Dorsolateral prefrontal cortex (tissue), 120 donors: ENCODE measurements at regions of chr1 and their contacts with region 1.

Region 1: GRCh38 chr1:36369061-36369861 is 16.5 kb downstream of the STK40 start:
- DNase-seq: peak; percentile 58 to 86 (median 75)
- H3K4me3 ChIP-seq: no peak overlapping the region
- H3K27ac ChIP-seq: peak overlapping the region in 42 of 59 donors; percentile 2 to 69 (median 41)
- H3K27me3 ChIP-seq: no peaks in the 10 kb centered on the region
- CTCF ChIP-seq: peak; percentile 84 to 99 (median 96)

Region 2: DNA sequence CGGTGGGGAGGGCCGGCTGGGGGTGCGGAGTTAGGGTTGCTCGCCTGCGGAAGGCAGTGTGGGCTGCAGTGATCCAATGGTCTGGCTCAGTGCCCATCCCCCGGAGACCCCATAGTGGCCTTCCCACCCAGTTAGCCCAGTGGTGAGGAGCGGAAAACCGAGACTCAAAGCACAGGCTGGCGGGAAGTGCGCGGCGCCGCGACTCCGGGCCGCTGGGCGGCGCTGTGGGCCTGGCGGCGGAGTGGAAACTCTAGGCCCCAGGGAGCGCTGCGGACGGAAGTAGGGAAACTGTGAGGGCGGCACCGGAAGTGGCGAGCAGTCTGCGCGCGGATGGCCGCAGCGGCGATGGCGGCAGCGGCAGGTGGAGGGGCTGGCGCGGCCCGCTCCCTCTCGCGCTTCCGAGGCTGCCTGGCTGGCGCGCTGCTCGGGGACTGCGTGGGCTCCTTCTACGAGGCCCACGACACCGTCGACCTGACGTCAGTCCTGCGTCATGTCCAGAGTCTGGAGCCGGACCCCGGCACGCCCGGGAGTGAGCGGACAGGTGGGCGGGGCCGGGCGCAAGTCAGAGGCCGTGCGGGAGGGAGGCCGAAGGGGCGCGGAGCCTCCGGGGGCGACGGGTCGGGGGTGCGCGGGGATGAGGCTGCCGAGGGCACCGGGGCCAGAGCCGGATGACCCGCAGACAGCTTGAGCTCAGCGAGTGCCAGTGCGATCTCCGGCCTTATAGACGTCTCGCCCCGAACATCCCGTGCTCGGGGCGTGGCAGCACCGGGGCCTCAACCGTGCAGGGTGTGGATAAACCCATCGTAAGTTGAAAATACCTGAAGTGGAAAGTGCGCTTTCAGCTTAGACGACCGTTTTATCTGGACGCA is 280.5 kb before region 1 on chr1 and contains the start of gene ADPRS:
- intact Hi-C with region 1: loop called in 1 of 2 experiments (anchors 5 kb)
- DNase-seq: peak; percentile 77 to 92 (median 84)
- H3K4me3 ChIP-seq: peak within 1 kb of the TSS; percentile 71 to 100 (median 95)
- H3K27ac ChIP-seq: peak within 1 kb of the TSS; percentile 43 to 97 (median 90)
- H3K27me3 ChIP-seq: peaks cover 0 to 4% (median 0%) of the 10 kb centered on the region in 45 donors
- CTCF ChIP-seq: peak; percentile 86 to 100 (median 99)
- total RNA-seq, gene ADPRS: 14.4 to 31.1 (median 20.5) TPM

Region 3: GRCh38 chr1:36300526-36300925 is 68.7 kb before region 1 on chr1:
- intact Hi-C with region 1: loop called (anchors 5 kb)
- DNase-seq: no peak
- H3K4me3 ChIP-seq: no peak overlapping the region
- H3K27ac ChIP-seq: peak overlapping the region in 32 of 59 donors; percentile 3 to 73 (median 48)
- H3K27me3 ChIP-seq: no peaks in the 10 kb centered on the region
- CTCF ChIP-seq: no peak

Region 4: DNA sequence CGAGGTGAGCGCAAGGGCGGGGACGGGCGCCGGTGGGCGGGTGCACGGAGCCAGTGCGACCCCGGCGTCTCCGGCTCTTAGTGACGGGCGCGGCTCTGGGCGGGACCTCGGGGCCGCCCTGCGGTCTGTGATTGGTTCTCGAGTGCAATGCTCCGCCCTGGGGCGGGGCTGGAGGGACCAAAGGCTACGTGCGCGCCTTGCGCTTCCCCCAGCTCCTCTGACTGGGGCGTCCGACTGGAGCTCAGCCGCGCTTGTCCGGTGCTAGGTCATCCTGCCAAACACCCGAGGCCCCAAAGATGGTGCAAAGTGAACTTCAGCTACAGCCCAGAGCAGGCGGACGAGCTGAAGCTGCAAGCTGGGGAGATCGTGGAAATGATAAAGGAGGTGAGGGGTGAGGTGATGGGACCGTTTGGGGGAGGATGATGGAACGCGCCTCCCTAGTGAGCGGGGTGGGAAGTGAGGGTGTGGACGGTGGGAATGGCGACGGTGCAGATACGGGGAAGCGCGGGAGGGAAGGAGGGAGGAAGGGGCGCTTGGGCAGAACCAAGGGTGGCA is 62.3 kb before region 1 on chr1:
- intact Hi-C with region 1: loop called (anchors 5 kb)
- DNase-seq: peak; percentile 71 to 96 (median 91)
- H3K4me3 ChIP-seq: peak overlapping the region; percentile 62 to 96 (median 81)
- H3K27ac ChIP-seq: peak overlapping the region in 32 of 59 donors; percentile 7 to 85 (median 60)
- H3K27me3 ChIP-seq: no peaks in the 10 kb centered on the region
- CTCF ChIP-seq: peak in 2 of 56 donors; percentile 10 to 28

Region 5: GRCh38 chr1:36342481-36343478 is 26.5 kb before region 1 on chr1:
- intact Hi-C with region 1: loop called in 1 of 2 experiments (anchors 2 kb)
- DNase-seq: peak in 6 of 10 donors; percentile 33 to 65 (median 52)
- H3K4me3 ChIP-seq: no peak overlapping the region
- H3K27ac ChIP-seq: peak overlapping the region in 10 of 59 donors; percentile 5 to 44 (median 18)
- H3K27me3 ChIP-seq: no peaks in the 10 kb centered on the region
- CTCF ChIP-seq: peak in 55 of 56 donors; percentile 31 to 83 (median 61)

Region 6: GRCh38 chr1:36411674-36412520 is 42.6 kb after region 1 on chr1:
- intact Hi-C with region 1: no loop called
- DNase-seq: peak in 1 of 10 donors; percentile 30
- H3K4me3 ChIP-seq: no peak overlapping the region
- H3K27ac ChIP-seq: no peak overlapping the region
- H3K27me3 ChIP-seq: no peaks in the 10 kb centered on the region
- CTCF ChIP-seq: no peak